ENCODE measurements at regions of chr5 and their contacts with region 1.

Region 1: DNA sequence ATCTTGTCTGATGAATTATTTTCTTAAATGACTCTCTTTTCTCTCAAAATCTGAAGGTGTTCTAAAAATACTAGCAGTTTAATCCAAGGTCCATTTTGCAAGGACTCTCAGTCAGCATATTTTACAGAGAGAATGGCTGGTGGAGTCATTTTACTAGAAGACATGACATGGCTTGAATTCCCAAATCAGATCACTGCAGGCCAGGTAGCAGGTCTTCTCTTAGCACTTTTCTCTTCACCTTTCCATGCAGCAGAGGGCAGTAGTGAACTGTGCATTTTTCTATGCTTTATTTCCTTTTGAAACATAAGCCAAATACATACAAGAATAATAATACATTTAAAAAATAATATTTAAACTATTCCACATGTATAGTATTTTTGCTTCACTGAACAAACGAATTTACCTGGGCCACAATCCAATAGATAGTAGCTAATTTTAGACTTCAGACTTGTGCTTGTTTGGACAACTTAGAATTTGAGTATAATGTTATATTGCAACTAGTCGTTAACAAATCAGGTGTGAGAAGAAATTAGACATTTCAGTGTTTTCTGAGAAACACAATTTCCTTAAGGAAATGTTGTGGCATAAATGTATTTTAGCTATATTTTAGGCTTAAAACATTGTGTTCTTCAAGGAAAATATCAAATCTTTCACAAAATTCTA is 289.4 kb upstream of the DAB2 start:
- DNase-seq: peak; percentile 79
- H3K4me3 Mint-ChIP-seq: no peak overlapping the region
- H3K27ac Mint-ChIP-seq: no peak overlapping the region
- H3K4me1 Mint-ChIP-seq: peaks cover 23% of the 10 kb centered on the region
- H3K27me3 Mint-ChIP-seq: no peaks in the 10 kb centered on the region
- CTCF ChIP-seq: peak; percentile 62

Region 2: GRCh38 chr5:39024005-39024404 is 690.2 kb before region 1 on chr5:
- CTCF ChIA-PET with region 1: no interaction called
- POLR2A ChIA-PET with region 1: no interaction called
- intact Hi-C with region 1: no loop called
- DNase-seq: no peak
- H3K4me3 Mint-ChIP-seq: no peak overlapping the region
- H3K27ac Mint-ChIP-seq: no peak overlapping the region
- H3K4me1 Mint-ChIP-seq: peaks cover 20% of the 10 kb centered on the region
- H3K27me3 Mint-ChIP-seq: no peaks in the 10 kb centered on the region
- CTCF ChIP-seq: no peak

Region 3: DNA sequence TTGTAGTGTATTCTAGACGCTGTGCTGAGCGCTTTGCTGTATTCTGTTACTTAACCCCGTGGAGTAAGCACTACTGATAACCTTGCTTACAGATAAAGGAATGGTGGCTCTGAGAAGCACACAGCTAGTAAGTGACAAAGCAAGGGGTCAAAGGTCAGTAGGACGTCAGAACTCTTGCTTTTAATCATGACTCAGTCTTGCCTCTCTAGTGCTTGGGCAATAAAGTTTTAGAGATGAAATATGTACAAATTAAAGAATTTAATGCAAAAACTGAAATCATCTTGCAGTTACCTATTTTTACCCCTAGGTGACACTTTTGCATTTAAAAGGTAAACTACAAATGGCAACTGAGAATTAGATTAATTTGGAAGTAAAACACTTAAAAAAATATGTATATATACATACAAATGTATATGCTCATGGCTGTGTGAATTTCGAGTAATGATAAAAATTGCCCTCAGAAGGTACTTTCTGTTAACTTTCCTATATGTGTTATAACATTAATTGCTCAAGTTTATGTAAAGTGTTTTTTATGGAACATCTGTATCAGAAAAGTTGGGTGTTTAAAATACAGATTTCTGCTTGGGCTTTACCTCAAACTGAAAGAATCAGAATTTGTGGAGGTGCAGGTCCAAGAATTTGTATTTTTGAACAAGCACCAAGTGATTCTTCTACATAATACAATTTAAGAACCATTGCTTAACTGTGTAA is 114.3 kb before region 1 on chr5:
- CTCF ChIA-PET with region 1: interaction called, 6 read pairs
- POLR2A ChIA-PET with region 1: no interaction called
- intact Hi-C with region 1: loop called (anchors 5 kb)
- DNase-seq: peak; percentile 67
- H3K4me3 Mint-ChIP-seq: no peak overlapping the region
- H3K27ac Mint-ChIP-seq: no peak overlapping the region
- H3K4me1 Mint-ChIP-seq: no peaks in the 10 kb centered on the region
- H3K27me3 Mint-ChIP-seq: peaks cover 29% of the 10 kb centered on the region
- CTCF ChIP-seq: peak; percentile 40

Region 4: DNA sequence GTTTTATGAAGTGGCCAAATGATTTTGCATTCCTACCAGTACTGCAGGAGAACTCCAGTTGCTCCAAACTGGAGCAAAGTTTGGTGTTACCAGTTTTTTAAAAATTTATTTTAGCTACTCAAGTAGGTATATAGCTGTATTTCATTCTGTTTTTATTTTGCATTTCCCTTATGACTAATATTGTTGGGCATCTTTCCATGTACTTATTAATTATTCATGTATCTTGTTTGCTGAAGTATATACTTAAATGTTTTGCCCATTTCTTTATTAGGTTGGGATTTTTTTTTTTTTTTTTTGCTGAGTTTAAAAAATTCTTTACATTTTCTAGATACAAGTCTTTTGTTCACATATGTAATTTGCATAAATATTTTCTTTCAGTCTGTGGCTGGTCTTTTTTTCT is 97.2 kb after region 1 on chr5:
- CTCF ChIA-PET with region 1: no interaction called
- POLR2A ChIA-PET with region 1: no interaction called
- intact Hi-C with region 1: no loop called
- DNase-seq: no peak
- H3K4me3 Mint-ChIP-seq: no peak overlapping the region
- H3K27ac Mint-ChIP-seq: no peak overlapping the region
- H3K4me1 Mint-ChIP-seq: no peaks in the 10 kb centered on the region
- H3K27me3 Mint-ChIP-seq: no peaks in the 10 kb centered on the region
- CTCF ChIP-seq: no peak

Region 5: GRCh38 chr5:39948867-39949468 is 234.8 kb after region 1 on chr5:
- CTCF ChIA-PET with region 1: interaction called, 51 read pairs
- POLR2A ChIA-PET with region 1: no interaction called
- intact Hi-C with region 1: loop called (anchors 1 kb)
- DNase-seq: peak; percentile 79
- H3K4me3 Mint-ChIP-seq: no peak overlapping the region
- H3K27ac Mint-ChIP-seq: no peak overlapping the region
- H3K4me1 Mint-ChIP-seq: peaks cover 5% of the 10 kb centered on the region
- H3K27me3 Mint-ChIP-seq: no peaks in the 10 kb centered on the region
- CTCF ChIP-seq: peak; percentile 62

Region 6: GRCh38 chr5:40386289-40386688 is 672.1 kb after region 1 on chr5:
- CTCF ChIA-PET with region 1: interaction called, 3 read pairs
- POLR2A ChIA-PET with region 1: no interaction called
- intact Hi-C with region 1: loop called (anchors 10 kb)
- DNase-seq: no peak
- H3K4me3 Mint-ChIP-seq: no peak overlapping the region
- H3K27ac Mint-ChIP-seq: no peak overlapping the region
- H3K4me1 Mint-ChIP-seq: peaks cover 26% of the 10 kb centered on the region
- H3K27me3 Mint-ChIP-seq: no peaks in the 10 kb centered on the region
- CTCF ChIP-seq: no peak

Region 7: GRCh38 chr5:40688127-40688761 is 974.1 kb after region 1 on chr5:
- CTCF ChIA-PET with region 1: interaction called, 81 read pairs
- POLR2A ChIA-PET with region 1: interaction called, 6 read pairs
- intact Hi-C with region 1: loop called (anchors 1 kb)
- DNase-seq: peak; percentile 90
- H3K4me3 Mint-ChIP-seq: no peak overlapping the region
- H3K27ac Mint-ChIP-seq: no peak overlapping the region
- H3K4me1 Mint-ChIP-seq: peaks cover 43% of the 10 kb centered on the region
- H3K27me3 Mint-ChIP-seq: no peaks in the 10 kb centered on the region
- CTCF ChIP-seq: peak; percentile 77

Region 8: DNA sequence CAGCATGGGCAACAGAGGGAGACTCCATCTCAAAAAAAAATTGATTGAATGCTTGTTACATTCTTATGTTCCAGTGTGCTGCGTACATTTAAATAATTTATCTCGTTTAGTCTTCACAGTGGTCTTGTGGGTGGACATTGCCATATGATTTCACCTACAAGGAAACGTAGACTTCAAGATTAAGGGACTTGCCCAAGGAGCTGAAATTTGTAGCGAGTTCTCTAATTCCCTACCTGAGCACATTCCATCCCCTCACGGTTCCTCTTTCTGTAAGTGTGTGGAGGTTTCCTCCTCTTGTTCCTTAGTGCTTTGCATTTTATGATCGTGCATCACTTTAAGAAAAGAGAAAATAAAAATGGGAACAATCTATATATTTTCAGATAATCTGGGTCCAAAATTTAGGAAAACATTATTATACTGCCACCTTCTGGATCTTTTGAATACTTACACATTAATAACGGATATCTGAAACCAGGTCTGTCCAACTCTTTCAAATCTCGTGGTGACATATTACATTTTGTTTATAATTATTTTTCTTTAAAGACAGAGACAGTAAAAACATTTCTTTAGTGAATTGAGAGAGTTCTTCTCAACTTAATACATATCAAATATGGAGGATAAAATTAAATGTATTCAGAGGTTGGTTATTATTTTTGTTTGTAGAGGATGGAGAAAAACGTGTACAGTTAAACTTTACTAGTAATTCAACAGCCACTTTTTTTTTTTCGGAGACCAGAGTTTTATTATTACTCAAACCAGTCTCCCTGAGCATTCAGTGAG is 1165.2 kb after region 1 on chr5:
- CTCF ChIA-PET with region 1: interaction called, 6 read pairs
- POLR2A ChIA-PET with region 1: no interaction called
- intact Hi-C with region 1: loop called (anchors 1 kb)
- DNase-seq: peak; percentile 38
- H3K4me3 Mint-ChIP-seq: no peak overlapping the region
- H3K27ac Mint-ChIP-seq: no peak overlapping the region
- H3K4me1 Mint-ChIP-seq: no peaks in the 10 kb centered on the region
- H3K27me3 Mint-ChIP-seq: no peaks in the 10 kb centered on the region
- CTCF ChIP-seq: peak; percentile 37